ENCODE measurements at regions of chr7 and their contacts with region 1.

Region 1: GRCh38 chr7:155995183-155995612 is 182.9 kb upstream of the SHH start:
- DNase-seq: peak; percentile 30
- H3K4me3 Mint-ChIP-seq: no peak overlapping the region
- H3K27ac Mint-ChIP-seq: no peak overlapping the region
- H3K4me1 Mint-ChIP-seq: peaks cover 53% of the 10 kb centered on the region
- H3K27me3 Mint-ChIP-seq: peaks cover 30% of the 10 kb centered on the region

Region 2: GRCh38 chr7:155380221-155380861 is 614.9 kb before region 1 on chr7:
- CTCF ChIA-PET with region 1: no interaction called
- intact Hi-C with region 1: no loop called
- DNase-seq: peak; percentile 87
- H3K4me3 Mint-ChIP-seq: no peak overlapping the region
- H3K27ac Mint-ChIP-seq: no peak overlapping the region
- H3K4me1 Mint-ChIP-seq: peaks cover 29% of the 10 kb centered on the region
- H3K27me3 Mint-ChIP-seq: peaks cover 91% of the 10 kb centered on the region

Region 3: GRCh38 chr7:155815332-155816191 is 179.6 kb before region 1 on chr7:
- CTCF ChIA-PET with region 1: no interaction called
- intact Hi-C with region 1: no loop called
- DNase-seq: peak; percentile 87
- H3K4me3 Mint-ChIP-seq: no peak overlapping the region
- H3K27ac Mint-ChIP-seq: no peak overlapping the region
- H3K4me1 Mint-ChIP-seq: peaks cover 17% of the 10 kb centered on the region
- H3K27me3 Mint-ChIP-seq: peaks cover 41% of the 10 kb centered on the region

Region 4: DNA sequence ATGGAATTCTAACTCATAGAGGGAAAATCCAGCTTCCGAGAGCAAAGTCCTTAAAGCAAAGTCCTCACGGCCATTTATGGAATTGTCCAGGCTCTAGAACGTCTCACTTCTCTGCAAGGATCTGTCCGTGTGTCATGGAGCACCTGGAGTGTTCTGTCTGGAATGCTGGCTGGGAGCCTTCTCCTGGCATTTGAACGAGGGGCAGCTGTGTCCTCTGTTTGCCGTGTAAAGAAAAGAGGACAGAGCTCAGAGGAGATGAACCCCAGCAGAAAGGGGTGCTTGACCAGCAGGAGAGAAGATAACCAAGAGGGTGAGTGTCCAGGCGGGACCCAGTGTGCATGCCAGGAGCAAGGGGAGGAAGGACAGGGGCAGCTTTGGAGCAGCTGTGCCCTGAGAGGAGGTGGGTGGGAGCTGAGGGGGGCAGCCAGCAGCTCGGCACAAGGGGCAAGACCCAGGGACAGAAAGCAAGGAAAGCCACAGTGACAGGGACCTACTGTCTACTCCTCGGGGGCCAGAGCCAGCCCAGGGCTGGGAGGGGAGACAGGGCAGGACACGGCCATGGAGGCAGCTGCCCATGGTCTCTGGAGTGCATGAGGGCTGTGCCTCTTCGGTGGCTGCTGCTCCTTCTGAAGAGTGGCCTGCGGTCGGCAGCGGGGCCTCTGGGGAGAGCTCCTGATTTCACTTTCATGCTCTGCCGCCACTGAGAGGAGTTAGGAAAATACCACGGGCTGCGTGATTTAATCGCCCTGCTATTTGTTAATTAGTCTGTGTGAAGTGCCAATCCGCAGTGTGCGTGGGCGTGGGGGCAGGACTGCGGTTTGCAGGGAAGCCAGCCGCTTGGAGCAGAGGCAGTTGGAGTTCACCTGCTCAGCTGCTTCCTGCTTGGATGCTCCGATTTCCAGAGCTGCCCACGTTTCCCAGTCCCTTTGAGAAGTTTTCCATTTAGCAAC is 33.7 kb before region 1 on chr7:
- CTCF ChIA-PET with region 1: interaction called, 5 read pairs
- intact Hi-C with region 1: loop called (anchors 1 kb)
- DNase-seq: no peak
- H3K4me3 Mint-ChIP-seq: no peak overlapping the region
- H3K27ac Mint-ChIP-seq: no peak overlapping the region
- H3K4me1 Mint-ChIP-seq: peaks cover 20% of the 10 kb centered on the region
- H3K27me3 Mint-ChIP-seq: peaks cover 8% of the 10 kb centered on the region

Region 5: DNA sequence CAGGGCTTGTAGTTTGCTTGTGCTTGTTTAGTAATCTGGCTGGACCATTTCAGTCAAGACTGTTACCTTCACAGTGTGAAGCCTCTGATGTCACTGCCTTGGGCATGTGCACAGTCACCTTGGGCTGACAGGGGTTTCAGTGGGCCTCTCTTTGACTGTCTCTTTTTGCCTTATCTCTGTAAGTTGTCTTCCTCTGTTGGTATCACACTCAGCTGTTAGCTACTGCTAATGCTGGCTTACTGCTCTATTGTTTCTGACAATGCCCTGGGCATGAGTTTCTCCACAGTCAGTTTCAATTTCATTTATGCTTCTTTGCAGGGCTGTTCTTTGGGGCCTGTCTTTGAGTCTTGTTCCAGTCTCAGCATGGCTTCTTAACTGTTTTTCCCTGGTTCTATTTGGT is 19.0 kb after region 1 on chr7:
- CTCF ChIA-PET with region 1: no interaction called
- intact Hi-C with region 1: loop called (anchors 1 kb)
- DNase-seq: peak; percentile 28
- H3K4me3 Mint-ChIP-seq: no peak overlapping the region
- H3K27ac Mint-ChIP-seq: no peak overlapping the region
- H3K4me1 Mint-ChIP-seq: peaks cover 6% of the 10 kb centered on the region
- H3K27me3 Mint-ChIP-seq: no peaks in the 10 kb centered on the region

Region 6: GRCh38 chr7:156096771-156097538 is 101.8 kb after region 1 on chr7:
- CTCF ChIA-PET with region 1: no interaction called
- intact Hi-C with region 1: loop called (anchors 5 kb)
- DNase-seq: peak; percentile 44
- H3K4me3 Mint-ChIP-seq: no peak overlapping the region
- H3K27ac Mint-ChIP-seq: no peak overlapping the region
- H3K4me1 Mint-ChIP-seq: peaks cover 28% of the 10 kb centered on the region
- H3K27me3 Mint-ChIP-seq: peaks cover 5% of the 10 kb centered on the region